A673 (cell line): ENCODE measurements at regions of chr3 and their contacts with region 1.

Region 1: DNA sequence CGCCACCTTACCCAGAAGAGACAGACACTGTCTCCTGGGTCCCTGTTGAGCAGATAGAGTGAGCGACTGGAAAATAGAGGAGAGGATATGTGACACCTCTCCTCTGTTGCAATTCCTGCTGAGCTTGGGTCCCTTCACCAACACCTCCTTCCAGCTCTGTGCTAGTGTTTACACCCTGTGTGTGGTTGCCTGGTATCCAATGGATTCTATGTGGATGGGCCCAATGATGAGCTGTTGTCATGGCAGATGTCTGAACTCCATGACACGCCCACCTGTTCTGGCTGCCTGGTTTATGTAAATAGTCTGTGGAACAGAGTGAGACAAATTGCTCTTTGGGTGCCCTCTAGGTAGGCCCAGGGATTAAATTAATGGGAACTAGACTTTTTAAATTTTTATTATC is 23.7 kb downstream of the RBM5 start:
- DNase-seq: no peak
- H3K4me3 ChIP-seq: no peak overlapping the region
- H3K27ac ChIP-seq: no peak overlapping the region
- H3K4me1 ChIP-seq: no peaks in the 10 kb centered on the region
- H3K27me3 ChIP-seq: no peaks in the 10 kb centered on the region
- CTCF ChIP-seq: no peak

Region 2: DNA sequence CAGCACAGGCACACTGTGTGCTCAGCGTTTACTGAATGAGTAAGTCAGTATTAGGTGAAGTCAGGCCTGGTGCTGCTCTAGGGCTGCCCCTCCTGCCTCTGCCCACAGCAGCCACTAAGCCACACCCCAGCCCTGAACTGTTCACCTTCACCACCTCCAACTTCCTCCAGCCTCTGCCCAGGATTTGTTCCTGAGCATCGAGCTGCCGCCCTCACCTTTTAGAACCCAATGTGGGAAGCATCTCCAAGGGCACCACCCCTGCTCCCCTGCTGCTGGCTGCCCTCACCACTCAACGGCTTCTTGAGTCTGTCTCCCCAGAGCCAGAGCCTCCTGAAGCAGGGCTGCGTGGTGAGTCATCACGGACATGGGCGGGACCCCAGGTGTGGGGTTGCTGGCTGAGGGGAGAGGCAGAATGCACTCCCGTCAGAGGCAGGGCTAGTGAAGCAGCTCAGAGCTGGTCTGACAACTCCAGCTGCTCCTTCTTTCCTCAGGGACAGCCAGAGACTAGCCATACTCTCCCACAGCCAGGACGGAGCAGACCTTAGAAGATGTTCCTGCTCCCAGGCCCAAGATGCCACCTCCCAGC is 204.3 kb after region 1 on chr3:
- CTCF ChIA-PET with region 1: no interaction called
- POLR2A ChIA-PET with region 1: interaction called, 17 read pairs
- intact Hi-C with region 1: no loop called
- DNase-seq: no peak
- H3K4me3 ChIP-seq: no peak overlapping the region
- H3K27ac ChIP-seq: no peak overlapping the region
- H3K4me1 ChIP-seq: peaks cover under 1% of the 10 kb centered on the region
- H3K27me3 ChIP-seq: no peaks in the 10 kb centered on the region
- CTCF ChIP-seq: no peak

Region 3: GRCh38 chr3:51384726-51385473 is 1272.4 kb after region 1 on chr3 and contains the start of gene MANF:
- CTCF ChIA-PET with region 1: no interaction called
- POLR2A ChIA-PET with region 1: no interaction called
- intact Hi-C with region 1: no loop called
- DNase-seq: peak; percentile 95
- H3K4me3 ChIP-seq: peak within 1 kb of the TSS; percentile 79
- H3K27ac ChIP-seq: peak within 1 kb of the TSS; percentile 94
- H3K4me1 ChIP-seq: no peaks in the 10 kb centered on the region
- H3K27me3 ChIP-seq: no peaks in the 10 kb centered on the region
- CTCF ChIP-seq: no peak
- total RNA-seq, gene MANF: 82.8 and 106 TPM in 2 replicates